Vagina (tissue), 2 donors: ENCODE measurements at regions of chr11 and their contacts with region 1.

Region 1: DNA sequence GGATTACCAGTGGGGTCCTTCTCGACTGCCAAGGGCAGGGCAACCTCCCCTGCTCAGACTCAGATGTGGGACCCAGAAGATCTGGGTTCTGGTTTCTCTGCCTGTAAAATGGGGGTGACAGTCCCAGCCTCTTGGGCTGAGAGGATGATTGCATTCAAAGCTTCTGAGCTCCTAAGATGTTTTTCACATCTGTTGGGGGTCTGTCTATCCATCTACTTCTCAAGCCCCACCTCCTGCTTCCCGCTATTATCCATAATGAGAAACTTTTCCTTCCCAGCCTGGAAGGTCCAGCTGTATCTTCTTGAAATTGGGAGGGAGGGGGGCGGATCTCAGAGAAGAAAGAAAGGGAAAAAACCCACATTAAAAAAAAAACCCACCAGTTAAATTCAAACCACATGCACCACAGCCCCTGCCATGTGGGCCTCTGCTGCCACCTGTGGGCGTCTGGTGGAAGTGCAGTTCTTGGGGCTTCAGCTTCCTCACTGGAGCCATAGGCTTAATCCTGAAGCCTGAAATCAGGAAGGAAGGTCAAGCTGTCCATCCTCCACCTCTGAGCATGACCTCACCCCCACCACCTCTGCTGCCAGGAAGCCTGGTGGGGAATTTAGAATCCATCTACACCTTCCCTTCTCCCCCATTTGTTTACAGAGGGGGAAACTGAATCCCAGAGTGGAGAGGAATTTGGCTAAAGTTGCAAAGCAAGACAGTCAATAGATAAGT is 27.3 kb downstream of the ARHGEF17 start:
- DNase-seq: no peak
- H3K4me3 ChIP-seq: peak overlapping the region in 1 of 2 donors; percentile 2
- H3K27ac ChIP-seq: peak overlapping the region; percentile 91
- H3K4me1 ChIP-seq: peaks cover 71% of the 10 kb centered on the region
- H3K27me3 ChIP-seq: no peaks in the 10 kb centered on the region
- CTCF ChIP-seq: peak; percentile 85 to 97 (median 88)
- POLR2A ChIP-seq: no peak

Region 2: GRCh38 chr11:72840780-72841179 is 494.6 kb before region 1 on chr11:
- intact Hi-C with region 1: no loop called
- DNase-seq: no peak
- H3K4me3 ChIP-seq: no peak overlapping the region
- H3K27ac ChIP-seq: no peak overlapping the region
- H3K4me1 ChIP-seq: no peaks in the 10 kb centered on the region
- H3K27me3 ChIP-seq: no peaks in the 10 kb centered on the region
- CTCF ChIP-seq: no peak
- POLR2A ChIP-seq: no peak

Region 3: GRCh38 chr11:73173755-73174494 is 161.4 kb before region 1 on chr11:
- intact Hi-C with region 1: no loop called
- DNase-seq: no peak
- H3K4me3 ChIP-seq: no peak overlapping the region
- H3K27ac ChIP-seq: no peak overlapping the region
- H3K4me1 ChIP-seq: peaks cover 23% of the 10 kb centered on the region
- H3K27me3 ChIP-seq: no peaks in the 10 kb centered on the region
- CTCF ChIP-seq: no peak
- POLR2A ChIP-seq: no peak

Region 4: DNA sequence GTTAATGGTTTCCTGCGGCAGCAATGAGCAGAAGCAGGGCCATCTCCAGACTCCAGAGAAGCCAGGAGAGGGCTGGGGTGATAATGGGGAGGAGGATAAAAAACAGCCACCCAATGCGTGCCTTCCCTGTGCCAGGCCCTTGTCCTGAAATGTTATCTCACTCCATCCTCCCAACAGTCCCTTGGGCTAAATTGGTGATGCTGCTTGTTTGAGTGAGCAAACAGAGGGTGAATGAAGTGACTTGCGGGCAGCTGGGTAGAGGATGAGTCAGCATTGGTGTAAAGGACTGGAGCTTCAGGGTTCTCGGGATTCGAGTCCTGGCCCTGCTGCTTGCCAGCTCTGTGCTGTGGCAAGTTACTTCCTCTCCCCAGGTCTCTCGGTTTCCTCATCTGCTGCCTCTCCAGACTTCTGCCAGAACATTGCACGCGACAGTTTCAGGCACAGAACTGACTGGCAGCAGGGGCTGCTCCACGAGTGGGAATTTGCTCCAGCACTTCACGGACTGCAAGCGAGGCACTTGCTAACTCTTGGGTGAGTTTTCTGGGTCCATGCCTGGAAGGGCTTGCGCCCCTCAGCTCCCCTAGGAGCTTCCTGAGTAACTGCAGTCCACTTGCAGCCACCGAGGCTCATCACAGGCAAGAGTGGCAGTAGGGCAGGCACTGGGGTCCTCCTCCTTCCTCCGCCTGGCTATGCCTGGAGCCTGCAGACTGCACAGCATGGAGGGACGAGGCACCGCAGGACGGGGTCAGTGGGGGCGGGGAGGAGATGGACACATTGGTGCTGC is 63.2 kb before region 1 on chr11 and contains the start of gene P2RY6:
- intact Hi-C with region 1: no loop called
- DNase-seq: no peak
- H3K4me3 ChIP-seq: peak within 1 kb of the TSS in 1 of 2 donors; percentile 7
- H3K27ac ChIP-seq: no peak within 1 kb of the TSS
- H3K4me1 ChIP-seq: no peaks in the 10 kb centered on the region
- H3K27me3 ChIP-seq: no peaks in the 10 kb centered on the region
- CTCF ChIP-seq: no peak
- POLR2A ChIP-seq: no peak
- total RNA-seq, gene P2RY6: 2.0 TPM

Region 5: DNA sequence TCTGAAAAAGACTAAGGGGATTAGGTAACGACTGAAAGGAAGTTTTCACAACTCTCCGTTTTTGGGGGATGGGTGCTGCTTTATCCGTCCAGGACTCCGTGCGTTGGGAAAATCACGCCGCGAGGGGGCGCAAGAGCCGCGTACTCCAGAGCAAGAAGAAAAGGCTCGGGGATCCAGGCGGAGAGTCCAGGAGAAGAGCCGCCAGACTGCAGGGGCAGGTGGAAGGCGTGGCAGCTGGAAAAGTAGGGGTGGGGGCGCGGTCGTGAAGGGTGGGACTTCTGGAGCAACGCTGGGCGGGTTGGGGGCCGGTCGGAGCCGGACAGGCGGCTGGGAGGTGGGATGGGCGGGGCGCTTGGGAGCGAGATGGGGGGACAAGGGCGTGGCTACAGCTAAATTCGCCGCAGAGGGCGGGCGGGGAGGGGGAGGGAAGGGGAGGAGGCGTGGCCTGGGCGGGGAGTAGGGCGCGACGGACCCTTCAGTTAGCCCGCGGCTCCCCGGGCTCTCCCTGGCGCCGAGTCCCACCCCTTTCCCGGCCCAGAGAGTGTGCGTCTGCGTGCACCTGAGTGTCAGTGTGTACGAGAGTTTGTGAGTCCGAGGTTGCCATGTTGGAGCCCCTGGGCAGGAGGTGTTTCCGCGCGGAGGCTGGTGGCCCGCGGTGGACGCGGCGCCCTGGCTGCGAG is 27.9 kb before region 1 on chr11:
- intact Hi-C with region 1: loop called (anchors 2 kb)
- DNase-seq: peak in 1 of 2 donors; percentile 99
- H3K4me3 ChIP-seq: peak overlapping the region; percentile 84 to 85
- H3K27ac ChIP-seq: peak overlapping the region; percentile 98
- H3K4me1 ChIP-seq: peaks cover 45% of the 10 kb centered on the region
- H3K27me3 ChIP-seq: no peaks in the 10 kb centered on the region
- CTCF ChIP-seq: peak; percentile 62 to 87 (median 83)
- POLR2A ChIP-seq: peak in 1 of 2 donors; percentile 61